K562 (cell line): ENCODE measurements at regions of chr1 and their contacts with region 1.

Region 1: GRCh38 chr1:242017584-242018233 is 18.8 kb upstream of the MAP1LC3C start:
- DNase-seq: peak; percentile 80 to 83 (median 81)
- ATAC-seq: peak; percentile 92
- H3K4me3 ChIP-seq: no peak overlapping the region
- H3K27ac ChIP-seq: no peak overlapping the region
- H3K4me1 ChIP-seq: no peaks in the 10 kb centered on the region
- H3K27me3 ChIP-seq: peaks cover 0 to 10% of the 10 kb centered on the region in 2 experiments; a peak in 2 of 5 replicates
- CTCF ChIP-seq: peak; percentile 80 to 91 (median 89)
- EP300 ChIP-seq: no peak
- POLR2A ChIP-seq: no peak
- RAD21 ChIP-seq: peak; percentile 56 to 81

Region 2: DNA sequence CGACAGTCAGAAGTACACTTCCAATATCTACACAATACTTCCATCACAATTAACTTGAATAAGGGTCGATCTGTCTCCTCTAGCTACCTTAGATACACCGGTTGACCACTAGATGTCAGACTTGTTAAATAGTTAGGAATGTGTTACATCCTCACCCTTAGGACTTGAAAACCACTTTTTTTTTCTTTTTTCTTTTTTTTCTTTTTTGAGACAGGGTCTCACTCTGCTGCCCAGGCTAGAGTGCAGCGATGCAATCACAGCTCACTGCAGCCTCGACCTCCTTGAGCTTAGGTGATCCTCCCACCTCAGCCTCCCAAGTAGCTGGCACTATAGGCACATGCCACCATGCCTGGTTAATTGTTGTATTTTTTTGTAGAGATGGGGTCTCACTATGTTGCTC is 1285.3 kb before region 1 on chr1:
- CTCF ChIA-PET with region 1: no interaction called
- POLR2A ChIA-PET with region 1: no interaction called
- in situ Hi-C with region 1: loop called (anchors 25 kb)
- intact Hi-C with region 1: no loop called
- DNase-seq: peak; percentile 41 to 50 (median 44)
- ATAC-seq: peak; percentile 93
- H3K4me3 ChIP-seq: no peak overlapping the region
- H3K27ac ChIP-seq: no peak overlapping the region
- H3K4me1 ChIP-seq: no peaks in the 10 kb centered on the region
- H3K27me3 ChIP-seq: no peaks in the 10 kb centered on the region
- CTCF ChIP-seq: peak; percentile 20 to 59 (median 58); a peak in 5 of 6 replicates
- EP300 ChIP-seq: no peak
- POLR2A ChIP-seq: no peak
- RAD21 ChIP-seq: peak; percentile 35 to 59; a peak in 3 of 4 replicates

Region 3: DNA sequence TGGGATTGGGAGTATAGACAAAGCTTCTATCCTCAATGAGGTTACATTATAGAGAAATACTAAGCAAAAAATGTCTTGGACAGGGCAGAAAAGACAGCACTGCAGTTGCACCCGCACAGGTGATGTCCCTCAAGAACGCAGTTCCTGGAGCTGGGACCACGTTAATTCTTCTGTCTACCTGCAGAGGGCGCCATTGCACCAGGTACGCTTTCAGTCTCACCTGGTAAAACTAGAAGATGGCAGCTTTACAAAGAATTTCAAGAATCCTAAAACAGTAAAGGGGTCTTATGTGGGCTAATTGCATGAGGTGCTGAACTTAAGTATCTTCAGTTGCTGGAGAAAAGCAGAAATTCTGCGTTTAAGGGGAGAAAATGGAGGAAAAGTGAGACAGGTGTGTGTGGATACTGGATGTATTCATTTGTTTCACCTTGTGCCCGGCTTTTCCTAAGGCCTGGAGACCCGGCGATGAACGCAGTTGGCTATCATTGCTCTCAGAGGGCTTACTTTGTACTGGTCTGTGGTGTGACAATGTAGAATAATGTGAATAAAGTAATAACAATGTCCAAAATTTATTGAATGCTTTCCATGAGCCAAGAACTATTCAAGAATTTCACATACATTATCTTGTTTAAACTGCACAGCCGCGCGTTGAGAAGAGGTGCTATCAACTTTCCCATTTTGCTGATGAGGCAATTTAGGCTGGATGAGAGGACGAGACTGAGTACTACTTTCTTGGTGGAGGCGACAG is 1129.5 kb before region 1 on chr1:
- CTCF ChIA-PET with region 1: no interaction called
- POLR2A ChIA-PET with region 1: no interaction called
- in situ Hi-C with region 1: no loop called
- intact Hi-C with region 1: loop called (anchors 10 kb)
- DNase-seq: peak; percentile 57 to 71 (median 68)
- ATAC-seq: peak; percentile 91
- H3K4me3 ChIP-seq: no peak overlapping the region
- H3K27ac ChIP-seq: no peak overlapping the region
- H3K4me1 ChIP-seq: no peaks in the 10 kb centered on the region
- H3K27me3 ChIP-seq: no peaks in the 10 kb centered on the region
- CTCF ChIP-seq: peak; percentile 70 to 91 (median 76)
- EP300 ChIP-seq: no peak
- POLR2A ChIP-seq: no peak
- RAD21 ChIP-seq: peak; percentile 73 to 81

Region 4: DNA sequence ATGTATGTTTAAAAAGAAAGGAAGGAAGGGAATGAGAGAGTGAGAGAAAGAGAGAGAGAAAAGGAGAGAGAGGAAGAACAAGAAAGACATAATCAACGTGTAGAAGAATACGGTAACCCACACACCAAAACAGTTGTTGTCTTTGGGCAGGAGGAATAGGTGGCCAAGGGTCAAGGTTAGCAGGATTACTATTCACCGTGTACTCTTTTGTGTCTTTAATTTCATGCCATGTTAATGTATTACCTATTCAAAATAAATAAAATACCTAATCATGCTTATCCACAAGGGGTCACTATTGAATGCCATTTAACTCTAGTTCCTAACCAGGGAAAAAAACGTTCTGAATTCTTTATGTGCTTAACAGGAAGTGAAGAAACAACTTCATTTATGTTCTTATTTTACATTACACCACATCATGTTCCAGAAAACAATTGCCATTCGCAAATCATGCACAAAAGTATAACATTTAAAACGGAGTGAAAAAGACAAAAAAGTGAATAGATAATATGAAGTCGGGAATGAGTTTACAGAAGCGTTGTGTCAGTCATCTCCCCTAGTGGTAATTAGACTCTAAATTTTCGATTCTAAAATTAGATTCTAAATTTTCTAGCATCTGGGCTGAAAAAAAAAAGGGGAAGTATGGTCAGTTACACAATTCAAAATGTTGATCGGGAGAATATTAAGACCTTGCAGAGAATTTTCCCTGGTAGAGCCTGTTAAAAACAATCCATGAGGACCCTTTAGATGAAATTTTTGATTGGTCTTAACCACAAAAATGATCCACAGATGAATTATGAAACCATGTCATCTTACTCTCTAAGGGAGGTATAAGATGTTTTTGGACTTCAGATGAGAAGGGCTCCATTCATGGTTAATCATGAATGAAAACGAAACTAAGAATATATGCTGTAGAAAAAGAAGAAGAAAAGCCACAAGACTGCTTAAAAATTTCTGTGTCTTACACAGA is 486.2 kb before region 1 on chr1:
- CTCF ChIA-PET with region 1: interaction called, 4 read pairs
- POLR2A ChIA-PET with region 1: no interaction called
- in situ Hi-C with region 1: no loop called
- intact Hi-C with region 1: loop called (anchors 1 kb)
- DNase-seq: peak; percentile 32 to 83 (median 51)
- ATAC-seq: peak; percentile 87
- H3K4me3 ChIP-seq: peak overlapping the region; percentile 31
- H3K27ac ChIP-seq: peak overlapping the region; percentile 48
- H3K4me1 ChIP-seq: peaks cover 0 to 4% of the 10 kb centered on the region in 2 experiments; a peak in 2 of 5 replicates
- H3K27me3 ChIP-seq: no peaks in the 10 kb centered on the region
- CTCF ChIP-seq: peak; percentile 55 to 91 (median 61)
- EP300 ChIP-seq: no peak; the same call in 1 of the 2 replicates
- POLR2A ChIP-seq: no peak
- RAD21 ChIP-seq: peak; percentile 95 to 97

Region 5: GRCh38 chr1:241857131-241857530 is 160.6 kb before region 1 on chr1:
- CTCF ChIA-PET with region 1: no interaction called
- POLR2A ChIA-PET with region 1: no interaction called
- in situ Hi-C with region 1: no loop called
- intact Hi-C with region 1: no loop called
- DNase-seq: no peak
- ATAC-seq: no peak
- H3K4me3 ChIP-seq: no peak overlapping the region
- H3K27ac ChIP-seq: no peak overlapping the region
- H3K4me1 ChIP-seq: no peaks in the 10 kb centered on the region
- H3K27me3 ChIP-seq: no peaks in the 10 kb centered on the region
- CTCF ChIP-seq: no peak
- EP300 ChIP-seq: no peak
- POLR2A ChIP-seq: no peak
- RAD21 ChIP-seq: no peak

Region 6: GRCh38 chr1:241895013-241895412 is 122.7 kb before region 1 on chr1:
- CTCF ChIA-PET with region 1: interaction called, 15 read pairs
- POLR2A ChIA-PET with region 1: no interaction called
- in situ Hi-C with region 1: no loop called
- intact Hi-C with region 1: loop called (anchors 1 kb)
- DNase-seq: no peak
- ATAC-seq: no peak
- H3K4me3 ChIP-seq: no peak overlapping the region
- H3K27ac ChIP-seq: no peak overlapping the region
- H3K4me1 ChIP-seq: no peaks in the 10 kb centered on the region
- H3K27me3 ChIP-seq: no peaks in the 10 kb centered on the region
- CTCF ChIP-seq: no peak
- EP300 ChIP-seq: no peak
- POLR2A ChIP-seq: no peak
- RAD21 ChIP-seq: no peak

Region 7: DNA sequence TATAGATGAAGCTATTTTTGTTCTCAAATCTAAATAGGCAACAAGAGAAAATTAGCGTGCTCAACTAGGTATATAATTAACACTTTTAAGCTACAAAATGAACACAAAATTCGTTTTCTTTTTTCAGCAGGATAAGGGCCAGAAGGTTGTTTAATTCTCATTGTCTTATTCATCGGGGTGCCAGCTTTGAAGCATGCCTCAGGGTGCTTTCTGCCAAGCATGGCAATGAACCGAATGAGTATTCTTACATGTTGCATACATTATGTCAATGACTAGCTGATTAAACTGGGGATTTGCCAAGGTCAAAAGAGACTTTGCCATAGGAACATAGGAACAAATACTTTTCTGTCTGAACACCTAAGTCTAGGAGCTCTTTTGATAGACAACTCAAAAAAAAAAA is 83.2 kb after region 1 on chr1:
- CTCF ChIA-PET with region 1: no interaction called
- POLR2A ChIA-PET with region 1: no interaction called
- in situ Hi-C with region 1: no loop called
- intact Hi-C with region 1: no loop called
- DNase-seq: no peak
- ATAC-seq: no peak
- H3K4me3 ChIP-seq: no peak overlapping the region
- H3K27ac ChIP-seq: no peak overlapping the region
- H3K4me1 ChIP-seq: no peaks in the 10 kb centered on the region
- H3K27me3 ChIP-seq: no peaks in the 10 kb centered on the region
- CTCF ChIP-seq: no peak
- EP300 ChIP-seq: no peak
- POLR2A ChIP-seq: no peak
- RAD21 ChIP-seq: no peak

Region 8: GRCh38 chr1:242128951-242129502 is 111.3 kb after region 1 on chr1:
- CTCF ChIA-PET with region 1: interaction called, 5 read pairs
- POLR2A ChIA-PET with region 1: no interaction called
- in situ Hi-C with region 1: no loop called
- intact Hi-C with region 1: loop called (anchors 1 kb)
- DNase-seq: peak in 2 of 4 experiments; percentile 14 to 32
- ATAC-seq: peak; percentile 92
- H3K4me3 ChIP-seq: no peak overlapping the region
- H3K27ac ChIP-seq: no peak overlapping the region
- H3K4me1 ChIP-seq: no peaks in the 10 kb centered on the region
- H3K27me3 ChIP-seq: no peaks in the 10 kb centered on the region
- CTCF ChIP-seq: peak; percentile 25 to 48 (median 36); a peak in 4 of 6 replicates
- EP300 ChIP-seq: no peak
- POLR2A ChIP-seq: no peak
- RAD21 ChIP-seq: peak in 1 of 2 experiments; percentile 50; a peak in 2 of 4 replicates

Region 9: GRCh38 chr1:242197907-242198815 is 180.5 kb after region 1 on chr1:
- CTCF ChIA-PET with region 1: no interaction called
- POLR2A ChIA-PET with region 1: no interaction called
- in situ Hi-C with region 1: no loop called
- intact Hi-C with region 1: loop called (anchors 5 kb)
- DNase-seq: no peak
- ATAC-seq: no peak
- H3K4me3 ChIP-seq: no peak overlapping the region
- H3K27ac ChIP-seq: no peak overlapping the region
- H3K4me1 ChIP-seq: no peaks in the 10 kb centered on the region
- H3K27me3 ChIP-seq: no peaks in the 10 kb centered on the region
- CTCF ChIP-seq: no peak
- EP300 ChIP-seq: no peak
- POLR2A ChIP-seq: no peak
- RAD21 ChIP-seq: no peak